ENCODE measurements at regions of chr11 and their contacts with region 1.

Region 1: DNA sequence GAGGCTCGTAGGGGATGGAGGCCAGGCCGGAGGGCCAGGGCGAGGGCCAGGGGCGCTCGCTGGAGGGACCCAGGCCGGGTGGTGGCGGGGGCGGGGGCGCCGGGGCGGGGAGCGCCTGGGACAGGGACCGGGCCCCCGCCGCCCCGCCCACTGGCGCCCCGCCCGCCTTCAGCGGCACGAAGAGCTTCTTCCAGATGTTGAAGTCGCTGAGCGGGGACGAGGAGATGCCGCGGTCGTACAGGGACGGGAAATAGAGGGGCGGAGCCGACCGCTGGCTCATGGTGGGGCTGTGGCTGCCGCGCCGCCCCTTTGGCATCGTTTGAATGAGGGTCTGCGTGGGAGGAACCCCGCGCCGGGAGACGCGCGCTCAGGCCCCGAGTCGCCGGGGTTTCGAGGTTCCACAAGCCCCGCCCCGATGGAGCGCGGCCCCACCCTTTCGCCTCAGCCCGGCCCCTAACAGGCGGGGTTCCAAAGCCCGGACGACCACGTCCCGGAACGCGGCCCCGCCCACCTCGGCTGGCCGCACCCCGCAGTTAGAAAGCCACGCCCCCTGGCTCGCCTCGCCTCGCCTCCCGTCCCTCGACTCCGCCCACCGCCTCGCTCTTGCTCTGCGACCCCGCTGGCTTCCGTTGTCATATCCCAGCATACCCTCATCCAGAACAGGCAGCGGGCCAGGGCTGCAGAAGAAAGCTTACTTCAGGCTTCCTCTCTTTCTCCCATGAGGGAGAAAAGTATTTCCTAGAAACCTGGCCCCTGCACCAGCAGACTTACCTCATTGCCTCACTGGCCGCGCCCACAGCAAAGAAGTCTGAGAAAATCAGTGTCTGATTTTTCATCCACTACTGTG is at the start of gene C11orf91:
- DNase-seq: peak; percentile 97 to 98
- ATAC-seq: peak; percentile 83 to 92 (median 90)
- H3K4me3 ChIP-seq: peak within 1 kb of the TSS in 9 of 10 donors; percentile 34 to 68 (median 56)
- H3K27ac ChIP-seq: peak within 1 kb of the TSS; percentile 80 to 92 (median 86)
- H3K4me1 ChIP-seq: peaks cover 14 to 84% (median 71%) of the 10 kb centered on the region in 9 donors
- H3K27me3 ChIP-seq: no peaks in the 10 kb centered on the region
- CTCF ChIP-seq: no peak
- total RNA-seq, gene C11orf91: 3.0 TPM in 1 of 10 donors, not detected in the others

Region 2: DNA sequence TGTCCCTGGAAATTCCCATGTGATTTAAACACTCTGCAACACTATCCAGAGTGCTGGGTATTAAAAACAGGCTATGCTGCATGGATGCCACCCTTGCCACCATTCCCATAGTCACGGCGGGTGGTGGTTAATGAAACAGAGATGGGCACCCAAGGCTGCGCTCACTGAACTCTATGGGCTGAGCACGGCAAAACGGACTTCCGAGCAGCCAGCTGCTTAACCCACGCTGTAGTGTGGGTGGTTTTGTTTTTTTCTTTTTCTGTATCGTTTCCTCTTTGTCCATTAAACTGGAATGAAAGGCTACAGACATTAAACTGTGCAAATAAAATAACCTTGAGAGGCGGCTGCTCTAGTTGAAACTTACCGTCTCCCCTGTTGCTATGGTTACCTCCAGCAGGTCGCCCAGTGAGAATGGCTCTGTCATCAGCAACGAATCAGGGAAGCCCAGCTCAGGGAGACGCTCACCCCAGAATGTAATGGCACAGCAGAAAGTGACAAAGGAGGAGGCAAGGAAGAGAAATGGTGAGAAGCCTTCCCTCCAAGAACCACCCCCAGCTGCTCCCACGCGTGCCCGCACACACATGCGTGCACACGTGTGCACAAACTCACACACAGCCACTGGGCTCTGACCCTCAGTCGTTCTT is 102.1 kb before region 1 on chr11:
- intact Hi-C with region 1: no loop called
- DNase-seq: no peak
- ATAC-seq: no peak
- H3K4me3 ChIP-seq: no peak overlapping the region
- H3K27ac ChIP-seq: no peak overlapping the region
- H3K4me1 ChIP-seq: no peaks in the 10 kb centered on the region
- H3K27me3 ChIP-seq: peaks cover 0 to 39% (median 8%) of the 10 kb centered on the region in 7 donors
- CTCF ChIP-seq: no peak

Region 3: GRCh38 chr11:33736148-33736809 is 35.6 kb after region 1 on chr11 and contains the start of gene CD59:
- intact Hi-C with region 1: loop called in 3 of 10 experiments (anchors 2 to 5 kb)
- DNase-seq: peak; percentile 98
- ATAC-seq: peak; percentile 96 to 97 (median 96)
- H3K4me3 ChIP-seq: peak within 1 kb of the TSS; percentile 66 to 100 (median 84)
- H3K27ac ChIP-seq: peak within 1 kb of the TSS; percentile 94 to 100 (median 96)
- H3K4me1 ChIP-seq: peaks cover 9 to 52% (median 45%) of the 10 kb centered on the region in 9 donors
- H3K27me3 ChIP-seq: no peaks in the 10 kb centered on the region
- CTCF ChIP-seq: no peak
- total RNA-seq, gene CD59: 676 to 1,261 (median 764) TPM

Measured in heart right ventricle (tissue), 16 donors.